Psoas muscle (tissue), 8 donors: ENCODE measurements at regions of chr16 and their contacts with region 1.

Region 1: DNA sequence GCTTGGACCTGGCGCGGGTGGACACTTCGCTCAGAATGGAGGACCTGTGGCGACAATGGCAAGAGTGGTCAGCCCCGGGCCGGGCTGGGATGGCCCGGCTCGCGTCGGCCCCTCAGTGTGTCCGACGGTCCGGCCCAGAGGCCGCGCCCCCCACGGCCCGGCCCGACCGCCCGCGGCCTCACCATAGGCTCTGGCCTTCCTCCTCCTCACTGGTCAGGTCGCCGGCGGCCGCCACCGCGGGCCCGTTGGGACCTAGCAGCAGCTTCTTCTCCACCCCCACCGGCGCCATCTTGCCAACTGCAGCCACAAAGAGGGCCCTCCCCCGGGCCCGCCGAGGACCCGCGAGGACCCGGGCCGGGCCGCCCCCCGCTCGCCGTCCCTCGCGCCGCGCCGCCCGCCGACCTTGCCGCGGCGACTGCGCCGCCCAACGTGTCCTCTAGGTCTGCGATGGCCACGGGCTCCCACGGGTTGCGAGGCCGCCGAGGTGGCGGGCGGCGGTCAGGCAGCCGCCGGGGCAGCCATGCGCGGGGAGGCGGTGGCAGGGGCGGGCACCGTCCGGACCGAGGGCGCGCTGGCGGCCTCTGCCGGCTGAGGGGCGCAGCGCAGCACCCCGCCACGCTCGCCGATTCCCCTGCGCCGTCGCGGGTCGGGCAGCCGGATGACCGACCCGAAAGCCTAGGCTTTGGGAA is at the start of gene DYNC1LI2:
- DNase-seq: peak; percentile 86 to 93
- ATAC-seq: peak; percentile 94 to 95 (median 94)
- H3K4me3 ChIP-seq: peak within 1 kb of the TSS; percentile 96
- H3K27ac ChIP-seq: peak within 1 kb of the TSS; percentile 88
- H3K4me1 ChIP-seq: peaks cover 25% of the 10 kb centered on the region
- H3K27me3 ChIP-seq: no peaks in the 10 kb centered on the region
- CTCF ChIP-seq: peak; percentile 95
- total RNA-seq, gene DYNC1LI2: 60.4 to 68.7 (median 64.8) TPM

Region 2: GRCh38 chr16:66406534-66407221 is 344.8 kb before region 1 on chr16:
- intact Hi-C with region 1: loop called in 1 of 2 experiments (anchors 10 kb)
- DNase-seq: peak; percentile 85 to 91
- ATAC-seq: peak; percentile 88 to 97 (median 91)
- H3K4me3 ChIP-seq: peak overlapping the region; percentile 64
- H3K27ac ChIP-seq: no peak overlapping the region
- H3K4me1 ChIP-seq: no peaks in the 10 kb centered on the region
- H3K27me3 ChIP-seq: peaks cover 0 to 16% (median 0%) of the 10 kb centered on the region in 3 donors
- CTCF ChIP-seq: peak; percentile 89

Region 3: DNA sequence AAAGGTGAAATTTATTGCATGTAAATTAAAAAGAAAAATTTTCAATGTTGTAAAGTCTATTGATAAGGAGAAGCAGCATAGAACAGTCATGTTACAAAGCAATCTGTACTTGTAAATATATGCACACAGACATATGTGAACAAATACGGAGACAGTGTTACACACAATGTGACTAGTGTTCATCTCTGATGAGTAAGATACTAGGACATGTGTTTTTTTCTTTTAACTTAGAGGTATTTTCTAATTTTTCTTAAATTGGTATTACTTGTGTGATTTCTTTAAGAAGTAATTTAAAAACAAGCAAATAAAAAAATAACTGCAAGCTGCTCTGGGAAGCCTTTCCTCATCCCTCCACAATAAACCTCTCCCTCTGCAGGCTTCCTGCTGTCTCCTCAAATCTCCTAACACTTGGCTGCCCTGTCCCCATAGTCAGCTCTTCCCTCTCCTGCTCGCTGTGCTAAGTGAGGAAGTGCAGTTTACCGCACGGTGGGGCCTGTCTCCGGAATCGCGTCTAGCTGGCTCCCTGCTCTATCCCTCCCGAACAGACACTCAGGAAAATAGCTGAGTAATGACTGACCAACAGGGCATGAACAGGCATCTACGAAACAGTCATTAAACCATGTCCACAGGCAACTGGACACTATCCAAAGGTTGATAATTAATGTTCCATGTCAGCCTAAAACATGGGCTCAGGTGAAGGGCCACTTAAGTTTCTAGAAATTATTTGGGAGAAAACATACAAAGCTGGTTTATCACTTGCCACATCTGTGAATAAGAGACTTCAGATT is 90.8 kb before region 1 on chr16:
- intact Hi-C with region 1: loop called in 1 of 2 experiments (anchors 10 kb)
- DNase-seq: peak; percentile 65 to 79
- ATAC-seq: peak; percentile 94 to 98 (median 96)
- H3K4me3 ChIP-seq: peak overlapping the region; percentile 28
- H3K27ac ChIP-seq: peak overlapping the region; percentile 80
- H3K4me1 ChIP-seq: peaks cover 15% of the 10 kb centered on the region
- H3K27me3 ChIP-seq: no peaks in the 10 kb centered on the region
- CTCF ChIP-seq: peak; percentile 34

Region 4: GRCh38 chr16:66696669-66697630 is 54.5 kb before region 1 on chr16 and contains the start of gene CMTM4:
- intact Hi-C with region 1: no loop called
- DNase-seq: peak; percentile 87 to 92
- ATAC-seq: peak; percentile 96 to 97 (median 97)
- H3K4me3 ChIP-seq: peak within 1 kb of the TSS; percentile 85
- H3K27ac ChIP-seq: peak within 1 kb of the TSS; percentile 68
- H3K4me1 ChIP-seq: peaks cover 11% of the 10 kb centered on the region
- H3K27me3 ChIP-seq: no peaks in the 10 kb centered on the region
- CTCF ChIP-seq: peak; percentile 37
- total RNA-seq, gene CMTM4: 7.7 to 10.3 (median 9.1) TPM